OCI-LY7 (cell line): ENCODE measurements at regions of chr4 and their contacts with region 1.

Region 1: GRCh38 chr4:140523857-140524742 is at the start of gene ELMOD2:
- DNase-seq: peak; percentile 99
- H3K4me3 ChIP-seq: peak within 1 kb of the TSS; percentile 80
- H3K27ac ChIP-seq: peak within 1 kb of the TSS; percentile 42
- H3K4me1 ChIP-seq: peaks cover 18% of the 10 kb centered on the region
- CTCF ChIP-seq: peak; percentile 95
- total RNA-seq, gene ELMOD2: 16.2 and 20.0 TPM in 2 replicates

Region 2: DNA sequence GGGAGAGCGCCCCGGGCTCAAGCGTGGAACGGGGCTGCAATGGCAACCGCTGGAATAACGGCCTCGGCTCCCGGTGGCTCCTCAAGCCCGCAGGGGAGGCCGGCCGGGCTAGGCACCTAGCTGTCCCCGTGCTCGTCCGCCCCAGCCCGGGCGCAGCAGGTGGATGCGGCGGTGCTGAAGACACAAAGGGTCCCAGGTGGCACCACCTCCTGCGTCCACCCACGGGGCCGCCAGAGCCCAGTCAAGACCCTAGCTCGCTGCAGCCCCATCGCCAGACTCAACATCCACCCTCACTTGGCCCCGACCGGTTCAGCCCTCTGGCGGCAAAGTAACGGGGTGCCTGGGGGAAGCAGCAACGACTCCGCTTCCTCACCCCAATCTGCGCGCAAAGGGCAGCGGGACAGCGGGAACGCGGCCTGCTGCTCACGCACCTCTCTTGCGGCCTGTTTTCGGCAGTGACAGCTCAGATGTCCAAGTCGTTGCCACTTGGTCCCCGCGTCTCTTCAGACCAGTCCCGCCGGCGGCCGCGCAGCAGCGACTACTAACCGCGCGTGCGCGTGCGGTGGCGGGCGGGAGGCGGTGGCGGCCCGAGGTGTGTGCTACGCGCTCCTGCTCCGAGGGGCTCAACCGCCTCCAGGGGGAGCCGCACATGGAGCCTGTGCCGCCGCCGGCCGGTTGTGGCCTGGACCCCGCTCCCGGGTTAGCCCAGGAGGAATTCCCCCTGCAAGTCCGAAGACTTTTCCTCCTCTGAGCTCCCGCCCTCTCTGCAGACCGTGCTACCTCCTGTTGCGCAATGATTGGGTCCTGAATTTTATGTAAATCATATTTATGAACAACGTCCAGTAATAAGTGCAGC is 96.8 kb before region 1 on chr4 and contains the start of gene CLGN:
- CTCF ChIA-PET with region 1: no interaction called
- POLR2A ChIA-PET with region 1: interaction called, 6 read pairs
- intact Hi-C with region 1: loop called (anchors 5 kb)
- DNase-seq: peak; percentile 82
- H3K4me3 ChIP-seq: peak within 1 kb of the TSS; percentile 72
- H3K27ac ChIP-seq: no peak within 1 kb of the TSS
- H3K4me1 ChIP-seq: peaks cover 10% of the 10 kb centered on the region
- CTCF ChIP-seq: peak; percentile 78
- total RNA-seq, gene CLGN: 1.1 and 1.3 TPM in 2 replicates

Region 3: DNA sequence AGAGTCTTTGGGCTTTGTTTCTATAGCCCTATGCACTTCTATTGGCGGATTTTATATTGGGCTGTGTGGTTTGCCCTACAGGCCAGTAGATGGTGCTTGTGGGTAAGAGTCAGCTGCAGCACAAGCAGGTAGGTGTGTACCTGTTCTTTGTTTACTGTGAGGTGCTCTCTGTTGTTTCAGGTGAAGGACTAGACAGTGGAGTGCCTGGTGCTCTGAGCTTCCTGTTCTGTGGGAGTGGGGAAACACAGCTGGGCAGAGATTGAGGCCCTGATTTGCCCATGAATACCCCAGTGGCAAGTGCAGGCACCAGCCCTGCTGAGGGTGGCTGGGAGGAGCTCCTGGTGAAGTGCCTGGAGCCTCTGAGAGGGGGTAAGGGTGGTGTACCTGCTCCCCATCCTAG is 71.0 kb after region 1 on chr4:
- CTCF ChIA-PET with region 1: no interaction called
- POLR2A ChIA-PET with region 1: no interaction called
- intact Hi-C with region 1: loop called (anchors 2 kb)
- DNase-seq: peak; percentile 73
- H3K4me3 ChIP-seq: no peak overlapping the region
- H3K27ac ChIP-seq: no peak overlapping the region
- H3K4me1 ChIP-seq: peaks cover 2% of the 10 kb centered on the region
- CTCF ChIP-seq: peak; percentile 87

Region 4: GRCh38 chr4:140609548-140610425 is 85.7 kb after region 1 on chr4:
- CTCF ChIA-PET with region 1: no interaction called
- POLR2A ChIA-PET with region 1: interaction called, 9 read pairs
- intact Hi-C with region 1: loop called (anchors 5 kb)
- DNase-seq: peak; percentile 75
- H3K4me3 ChIP-seq: no peak overlapping the region
- H3K27ac ChIP-seq: no peak overlapping the region
- H3K4me1 ChIP-seq: peaks cover 32% of the 10 kb centered on the region
- CTCF ChIP-seq: peak; percentile 87

Region 5: DNA sequence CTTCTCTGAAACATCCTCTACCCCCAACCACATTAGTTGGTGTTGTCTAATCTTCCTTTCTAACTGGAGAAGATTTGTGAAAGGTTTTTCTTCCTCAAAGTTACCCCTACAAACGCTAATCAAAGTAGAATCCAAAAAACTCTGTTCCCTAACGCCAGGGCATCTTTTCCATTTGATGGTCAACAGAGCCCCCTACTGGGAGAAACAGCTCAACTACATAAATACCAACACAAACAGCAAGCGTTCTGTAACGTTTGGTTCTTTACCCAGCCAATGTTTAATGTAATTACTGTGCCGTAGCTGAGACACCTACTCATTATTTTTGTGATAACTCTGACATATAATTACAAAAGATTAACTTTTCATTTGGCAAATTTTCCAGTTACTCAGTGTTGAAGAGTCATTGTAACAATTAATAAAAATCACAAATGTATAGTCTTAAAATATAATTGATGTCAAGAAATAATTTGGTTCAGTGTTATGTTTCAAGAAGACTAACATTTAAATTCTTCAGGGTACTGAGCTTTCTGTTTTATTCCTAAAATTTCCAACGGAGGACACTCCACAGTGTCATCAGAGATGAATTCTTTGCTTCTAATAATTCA is 327.0 kb after region 1 on chr4:
- CTCF ChIA-PET with region 1: no interaction called
- POLR2A ChIA-PET with region 1: no interaction called
- intact Hi-C with region 1: loop called (anchors 5 kb)
- DNase-seq: peak; percentile 86
- H3K4me3 ChIP-seq: no peak overlapping the region
- H3K27ac ChIP-seq: no peak overlapping the region
- H3K4me1 ChIP-seq: peaks cover 27% of the 10 kb centered on the region
- CTCF ChIP-seq: peak; percentile 100